ENCODE measurements at regions of chr2 and their contacts with region 1.

Region 1: GRCh38 chr2:46984642-46985476 is 69.3 kb upstream of the MCFD2 start:
- DNase-seq: no peak
- ATAC-seq: peak; percentile 25
- H3K4me3 Mint-ChIP-seq: peak overlapping the region; percentile 76
- H3K27ac Mint-ChIP-seq: peak overlapping the region; percentile 98
- H3K4me1 Mint-ChIP-seq: peaks cover 87% of the 10 kb centered on the region
- H3K27me3 Mint-ChIP-seq: no peaks in the 10 kb centered on the region
- CTCF ChIP-seq: no peak

Region 2: GRCh38 chr2:46915811-46916630 is 68.8 kb before region 1 on chr2:
- CTCF ChIA-PET with region 1: no interaction called
- POLR2A ChIA-PET with region 1: interaction called, 12 read pairs
- intact Hi-C with region 1: loop called (anchors 1 kb)
- DNase-seq: peak; percentile 80
- ATAC-seq: peak; percentile 83
- H3K4me3 Mint-ChIP-seq: peak overlapping the region; percentile 90
- H3K27ac Mint-ChIP-seq: peak overlapping the region; percentile 81
- H3K4me1 Mint-ChIP-seq: peaks cover 65% of the 10 kb centered on the region
- H3K27me3 Mint-ChIP-seq: no peaks in the 10 kb centered on the region
- CTCF ChIP-seq: no peak

Region 3: DNA sequence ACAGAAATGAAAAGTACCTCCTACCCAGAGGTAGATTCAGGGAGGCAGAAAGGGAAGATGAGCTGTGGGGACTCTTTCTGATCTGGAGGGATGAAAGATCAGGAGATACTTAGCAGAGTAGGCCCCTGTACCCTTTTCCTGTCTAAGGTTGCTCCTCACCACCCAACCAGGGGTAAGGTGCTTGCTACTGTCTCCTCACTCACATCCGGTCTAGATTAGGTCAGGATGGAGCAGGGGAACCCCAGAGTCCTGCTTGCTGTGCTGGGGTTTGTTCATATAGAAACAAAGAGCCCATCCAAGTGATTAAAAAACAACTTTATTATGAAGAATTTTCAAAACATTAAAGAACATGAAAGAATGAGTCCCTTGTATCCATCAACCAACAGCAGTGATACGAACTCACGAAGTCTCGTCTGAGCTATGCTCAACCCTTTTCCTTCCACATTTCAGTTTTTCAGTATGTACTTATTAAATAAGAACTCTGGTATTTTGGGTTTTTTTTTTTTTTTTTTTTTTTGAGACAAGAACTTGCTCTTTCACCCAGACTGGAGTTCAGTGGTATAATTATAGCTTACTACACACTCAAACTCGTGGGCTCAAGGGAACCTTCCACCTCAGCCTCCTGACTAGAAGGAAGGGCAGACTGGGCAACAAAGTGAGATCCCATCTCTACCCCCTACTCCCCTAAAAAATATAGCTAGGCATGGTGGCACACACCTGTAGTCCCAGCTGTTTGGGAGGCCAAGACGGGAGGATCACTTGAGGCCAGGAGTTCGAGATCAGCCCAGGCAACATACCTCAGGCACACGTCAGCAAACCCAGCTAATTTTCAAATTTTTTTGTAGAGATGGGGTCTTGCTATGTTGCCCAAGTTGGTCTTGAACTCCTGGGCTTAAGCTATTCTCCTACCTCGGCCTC is 40.7 kb before region 1 on chr2:
- CTCF ChIA-PET with region 1: no interaction called
- POLR2A ChIA-PET with region 1: no interaction called
- intact Hi-C with region 1: loop called (anchors 1 kb)
- DNase-seq: peak; percentile 34
- ATAC-seq: peak; percentile 38
- H3K4me3 Mint-ChIP-seq: peak overlapping the region; percentile 100
- H3K27ac Mint-ChIP-seq: peak overlapping the region; percentile 100
- H3K4me1 Mint-ChIP-seq: peaks cover 81% of the 10 kb centered on the region
- H3K27me3 Mint-ChIP-seq: no peaks in the 10 kb centered on the region
- CTCF ChIP-seq: no peak

Region 4: DNA sequence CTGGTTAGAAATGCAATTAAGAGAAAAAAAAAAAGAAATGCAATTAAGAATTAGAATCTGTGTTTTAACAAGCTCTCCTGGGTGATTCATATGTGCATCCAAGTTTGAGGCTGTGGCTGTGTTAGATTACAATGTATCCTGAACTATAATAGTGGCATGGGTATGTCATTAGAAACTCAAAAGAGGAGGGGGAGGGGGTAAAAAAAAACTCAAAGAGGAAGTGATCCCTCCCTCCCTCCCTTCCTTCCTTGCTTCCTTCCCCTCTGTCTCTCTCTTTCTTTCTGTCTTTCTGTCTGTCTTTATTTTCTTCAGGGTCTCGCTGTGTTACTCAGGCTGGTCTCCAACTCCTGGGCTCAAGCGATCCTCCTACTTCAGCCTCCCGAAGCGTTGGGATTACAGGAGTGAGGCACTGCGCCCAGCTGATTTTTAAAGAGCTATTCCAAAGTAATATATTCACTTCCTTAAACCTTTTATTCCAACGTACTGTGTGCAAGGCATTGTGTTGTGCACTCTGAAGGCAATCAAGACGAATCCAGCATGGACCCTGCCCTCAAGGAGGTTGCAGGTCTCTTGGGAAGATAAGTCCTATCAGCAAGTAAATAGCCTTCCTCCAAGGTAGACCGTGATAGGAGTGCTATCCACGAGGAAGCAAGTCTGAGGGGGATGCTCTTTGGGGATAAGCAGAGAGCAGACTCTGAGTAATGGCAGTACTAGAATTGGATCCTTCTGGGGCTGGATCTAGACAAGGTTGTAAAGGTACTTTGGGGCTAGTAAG is 33.4 kb before region 1 on chr2:
- CTCF ChIA-PET with region 1: no interaction called
- POLR2A ChIA-PET with region 1: interaction called, 13 read pairs
- intact Hi-C with region 1: no loop called
- DNase-seq: no peak
- ATAC-seq: peak; percentile 54
- H3K4me3 Mint-ChIP-seq: peak overlapping the region; percentile 57
- H3K27ac Mint-ChIP-seq: peak overlapping the region; percentile 76
- H3K4me1 Mint-ChIP-seq: peaks cover 61% of the 10 kb centered on the region
- H3K27me3 Mint-ChIP-seq: no peaks in the 10 kb centered on the region
- CTCF ChIP-seq: no peak

Region 5: DNA sequence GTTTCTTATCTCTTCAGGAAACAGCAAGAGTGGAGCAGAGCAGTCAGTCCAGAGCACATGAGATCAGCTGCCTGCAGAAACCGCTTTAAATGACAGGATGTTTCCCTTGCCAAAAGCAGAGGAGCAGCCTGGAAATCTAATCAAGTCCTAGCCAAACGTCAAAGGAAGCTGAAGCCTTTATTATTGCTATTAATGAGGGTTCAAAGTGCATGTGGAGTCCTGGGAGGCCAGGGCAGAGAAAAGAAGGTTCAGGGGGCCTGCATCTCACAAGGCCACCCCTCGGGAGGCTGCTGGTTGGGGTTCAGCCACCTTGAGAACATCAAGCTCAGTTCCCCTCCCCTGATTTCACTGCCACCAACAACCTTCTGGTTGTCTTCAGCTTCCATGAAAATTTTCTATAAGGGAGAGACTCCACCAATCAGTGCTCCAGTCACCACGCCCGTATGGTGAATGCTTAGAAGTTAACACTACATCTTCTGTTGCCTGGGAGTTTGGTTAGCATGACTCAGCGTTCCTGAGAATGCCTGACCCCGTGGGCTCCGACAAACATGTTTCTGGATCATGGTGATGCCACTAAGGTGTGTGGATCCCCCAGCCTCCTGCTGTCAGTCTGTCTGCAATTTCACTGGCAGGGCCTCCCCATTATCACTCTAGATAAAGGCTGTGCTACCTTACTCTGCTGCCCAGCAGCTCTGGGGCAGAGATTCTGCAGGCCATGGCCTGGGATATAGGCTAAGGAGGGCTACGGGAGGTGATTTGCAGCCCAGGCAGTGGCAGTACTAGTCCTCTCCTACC is 104.0 kb after region 1 on chr2:
- CTCF ChIA-PET with region 1: no interaction called
- POLR2A ChIA-PET with region 1: no interaction called
- intact Hi-C with region 1: no loop called
- DNase-seq: no peak
- ATAC-seq: no peak
- H3K4me3 Mint-ChIP-seq: no peak overlapping the region
- H3K27ac Mint-ChIP-seq: no peak overlapping the region
- H3K4me1 Mint-ChIP-seq: peaks cover 23% of the 10 kb centered on the region
- H3K27me3 Mint-ChIP-seq: no peaks in the 10 kb centered on the region
- CTCF ChIP-seq: no peak